ENCODE measurements at regions of chr17 and their contacts with region 1.

Region 1: GRCh38 chr17:45161019-45161825 is 453 bp upstream of the HEXIM2 start:
- DNase-seq: peak; percentile 90 to 100 (median 95)
- ATAC-seq: peak; percentile 92
- H3K4me3 ChIP-seq: peak overlapping the region; percentile 86
- H3K27ac ChIP-seq: peak overlapping the region; percentile 98
- H3K4me1 ChIP-seq: peaks cover 38 to 39% of the 10 kb centered on the region in 2 experiments
- H3K27me3 ChIP-seq: no peaks in the 10 kb centered on the region
- CTCF ChIP-seq: no peak; a peak in 3 of 6 replicates
- EP300 ChIP-seq: peak; percentile 23
- POLR2A ChIP-seq: peak; percentile 94
- RAD21 ChIP-seq: 0 out of 4 replicates have a peak, but pooled peaks of 1 of the 2 experiments have one; percentile 4

Region 2: DNA sequence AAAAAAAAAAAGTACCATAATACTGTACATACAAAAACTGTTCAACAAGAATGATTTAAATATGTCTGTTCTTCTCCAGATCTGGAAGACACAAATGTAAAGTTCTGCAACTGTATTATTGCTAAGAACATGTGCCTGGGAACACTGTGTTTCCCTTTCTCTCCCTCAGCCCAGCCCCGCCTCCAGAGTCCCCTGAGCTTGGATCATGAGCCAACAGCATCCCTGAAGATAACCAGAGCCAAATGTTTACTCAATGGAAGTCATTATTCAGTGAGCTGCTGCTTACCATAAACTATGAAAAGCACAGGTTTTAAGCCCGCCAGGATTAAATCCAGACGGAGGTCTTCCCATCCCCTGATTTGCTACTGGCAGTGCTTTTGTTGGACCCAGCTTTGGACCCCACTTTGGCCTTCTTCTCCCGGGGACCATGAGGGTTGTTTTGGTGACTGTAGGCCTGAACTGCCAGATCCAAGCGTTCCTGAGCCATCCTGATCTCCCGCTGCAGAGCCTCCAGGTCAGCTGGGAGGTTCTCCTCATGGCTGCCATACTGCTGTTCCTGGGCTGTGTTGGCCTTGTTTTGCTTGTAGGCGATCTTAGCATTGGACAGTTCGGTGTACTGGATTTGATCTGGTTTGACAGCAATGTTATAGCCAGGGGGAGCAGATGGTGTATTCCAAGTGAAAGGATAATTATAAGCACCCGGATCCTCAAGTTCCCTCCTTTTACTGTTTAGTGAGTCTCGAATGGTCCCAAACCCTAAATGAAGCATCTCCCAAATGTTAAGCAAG is 356.7 kb before region 1 on chr17:
- CTCF ChIA-PET with region 1: no interaction called
- POLR2A ChIA-PET with region 1: no interaction called
- in situ Hi-C with region 1: no loop called
- intact Hi-C with region 1: no loop called
- DNase-seq: no peak
- ATAC-seq: no peak
- H3K4me3 ChIP-seq: no peak overlapping the region
- H3K27ac ChIP-seq: no peak overlapping the region
- H3K4me1 ChIP-seq: no peaks in the 10 kb centered on the region; a peak in 1 of 5 replicates
- H3K27me3 ChIP-seq: peaks cover 44 to 61% of the 10 kb centered on the region in 2 experiments
- CTCF ChIP-seq: no peak
- EP300 ChIP-seq: no peak
- POLR2A ChIP-seq: no peak
- RAD21 ChIP-seq: no peak

Region 3: GRCh38 chr17:45172454-45173286 is 11.4 kb after region 1 on chr17:
- CTCF ChIA-PET with region 1: no interaction called
- POLR2A ChIA-PET with region 1: interaction called, 14 read pairs
- in situ Hi-C with region 1: no loop called
- intact Hi-C with region 1: no loop called
- DNase-seq: no peak
- ATAC-seq: no peak
- H3K4me3 ChIP-seq: no peak overlapping the region
- H3K27ac ChIP-seq: no peak overlapping the region
- H3K4me1 ChIP-seq: peaks cover 2 to 38% of the 10 kb centered on the region in 2 experiments; a peak in 3 of 5 replicates
- H3K27me3 ChIP-seq: no peaks in the 10 kb centered on the region
- CTCF ChIP-seq: no peak
- EP300 ChIP-seq: no peak
- POLR2A ChIP-seq: no peak
- RAD21 ChIP-seq: no peak

Measured in K562 (cell line).